ENCODE measurements at regions of chr3 and their contacts with region 1.

Region 1: GRCh38 chr3:72214066-72214951 is 429.4 kb upstream of the PROK2 start:
- DNase-seq: no peak
- H3K4me3 ChIP-seq: no peak overlapping the region
- CTCF ChIP-seq: no peak

Region 2: GRCh38 chr3:72163809-72164634 is 50.3 kb before region 1 on chr3:
- in situ Hi-C with region 1: no loop called
- DNase-seq: no peak
- H3K4me3 ChIP-seq: no peak overlapping the region
- CTCF ChIP-seq: no peak

Region 3: GRCh38 chr3:72177083-72178050 is 36.9 kb before region 1 on chr3:
- in situ Hi-C with region 1: loop called (anchors 5 kb)
- DNase-seq: no peak
- H3K4me3 ChIP-seq: no peak overlapping the region
- CTCF ChIP-seq: no peak

Measured in astrocyte of the cerebellum (primary cell).